A549 (cell line): ENCODE measurements at regions of chr3 and their contacts with region 1.

Region 1: GRCh38 chr3:189967254-189967865 is 153.3 kb downstream of the P3H2 start:
- DNase-seq: peak; percentile 26 to 55
- ATAC-seq: peak in 1 of 2 experiments; percentile 67; a peak in 3 of 6 replicates
- H3K4me3 ChIP-seq: no peak overlapping the region
- H3K27ac ChIP-seq: no peak overlapping the region
- H3K4me1 ChIP-seq: 0 out of 3 replicates have a peak, but pooled peaks cover 1% of the 10 kb centered on the region
- CTCF ChIP-seq: peak; percentile 75
- EP300 ChIP-seq: no peak
- POLR2A ChIP-seq: no peak
- RAD21 ChIP-seq: peak; percentile 84 to 85

Region 2: DNA sequence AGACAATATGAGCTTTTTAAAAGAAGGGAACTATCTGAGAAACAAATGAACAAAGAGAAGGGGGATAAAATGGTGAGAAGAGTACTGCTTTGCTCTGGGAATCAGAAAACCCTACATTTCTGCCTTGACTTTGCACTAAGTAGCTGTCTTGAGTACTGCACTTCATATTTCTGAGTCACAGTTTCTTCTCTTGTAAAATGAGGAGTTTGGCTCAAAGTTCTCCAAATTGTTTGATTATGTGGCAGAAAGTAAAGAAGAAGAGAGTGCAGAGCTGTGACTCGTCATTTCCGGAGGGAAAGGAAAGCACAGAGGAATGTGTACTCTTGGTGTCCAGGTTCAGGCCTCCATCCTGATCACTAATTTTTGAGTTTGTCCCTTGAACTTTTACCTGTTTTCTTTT is 281.5 kb before region 1 on chr3:
- CTCF ChIA-PET with region 1: no interaction called
- POLR2A ChIA-PET with region 1: no interaction called
- DNase-seq: peak in 1 of 2 experiments; percentile 72
- ATAC-seq: peak in 1 of 2 experiments; percentile 84; a peak in 3 of 6 replicates
- H3K4me3 ChIP-seq: no peak overlapping the region
- H3K27ac ChIP-seq: peak overlapping the region; percentile 70 to 82
- H3K4me1 ChIP-seq: peaks cover 20% of the 10 kb centered on the region
- CTCF ChIP-seq: no peak
- EP300 ChIP-seq: no peak
- POLR2A ChIP-seq: no peak
- RAD21 ChIP-seq: no peak

Region 3: GRCh38 chr3:189927975-189928895 is 39.1 kb before region 1 on chr3:
- CTCF ChIA-PET with region 1: no interaction called
- POLR2A ChIA-PET with region 1: no interaction called
- DNase-seq: no peak
- ATAC-seq: no peak
- H3K4me3 ChIP-seq: no peak overlapping the region
- H3K27ac ChIP-seq: peak overlapping the region; percentile 22 to 59; a peak in 4 of 6 replicates
- H3K4me1 ChIP-seq: no peaks in the 10 kb centered on the region
- CTCF ChIP-seq: no peak
- EP300 ChIP-seq: no peak
- POLR2A ChIP-seq: no peak
- RAD21 ChIP-seq: no peak

Region 4: GRCh38 chr3:190205739-190206138 is 238.4 kb after region 1 on chr3:
- CTCF ChIA-PET with region 1: interaction called, 15 read pairs
- POLR2A ChIA-PET with region 1: no interaction called
- DNase-seq: peak; percentile 25 to 51
- ATAC-seq: peak; percentile 73 to 78
- H3K4me3 ChIP-seq: no peak overlapping the region
- H3K27ac ChIP-seq: peak overlapping the region; percentile 8 to 30; a peak in 3 of 6 replicates
- H3K4me1 ChIP-seq: peaks cover 14% of the 10 kb centered on the region
- CTCF ChIP-seq: no peak
- EP300 ChIP-seq: no peak
- POLR2A ChIP-seq: no peak
- RAD21 ChIP-seq: no peak